Naive thymus-derived CD4-positive, alpha-beta T cell (primary cell): ENCODE measurements at regions of chr5 and their contacts with region 1.

Region 1: GRCh38 chr5:373710-374602 is 52.4 kb downstream of the AHRR start:
- DNase-seq: peak in 6 of 9 donors; percentile 34 to 84 (median 41)
- ATAC-seq: peak; percentile 56
- H3K4me3 ChIP-seq: no peak overlapping the region
- H3K4me3 Mint-ChIP-seq: peak overlapping the region in 8 of 10 donors; percentile 24 to 82 (median 54)
- H3K27ac ChIP-seq: peak overlapping the region; percentile 7
- H3K27ac Mint-ChIP-seq: peak overlapping the region in 1 of 9 donors; percentile 94
- H3K4me1 ChIP-seq: peaks cover 0 to 7% of the 10 kb centered on the region in 2 donors
- H3K4me1 Mint-ChIP-seq: peaks cover 9 to 77% (median 13%) of the 10 kb centered on the region in 7 donors
- H3K27me3 ChIP-seq: no peaks in the 10 kb centered on the region
- H3K27me3 Mint-ChIP-seq: peaks cover 0 to 17% (median 4%) of the 10 kb centered on the region in 5 donors

Region 2: DNA sequence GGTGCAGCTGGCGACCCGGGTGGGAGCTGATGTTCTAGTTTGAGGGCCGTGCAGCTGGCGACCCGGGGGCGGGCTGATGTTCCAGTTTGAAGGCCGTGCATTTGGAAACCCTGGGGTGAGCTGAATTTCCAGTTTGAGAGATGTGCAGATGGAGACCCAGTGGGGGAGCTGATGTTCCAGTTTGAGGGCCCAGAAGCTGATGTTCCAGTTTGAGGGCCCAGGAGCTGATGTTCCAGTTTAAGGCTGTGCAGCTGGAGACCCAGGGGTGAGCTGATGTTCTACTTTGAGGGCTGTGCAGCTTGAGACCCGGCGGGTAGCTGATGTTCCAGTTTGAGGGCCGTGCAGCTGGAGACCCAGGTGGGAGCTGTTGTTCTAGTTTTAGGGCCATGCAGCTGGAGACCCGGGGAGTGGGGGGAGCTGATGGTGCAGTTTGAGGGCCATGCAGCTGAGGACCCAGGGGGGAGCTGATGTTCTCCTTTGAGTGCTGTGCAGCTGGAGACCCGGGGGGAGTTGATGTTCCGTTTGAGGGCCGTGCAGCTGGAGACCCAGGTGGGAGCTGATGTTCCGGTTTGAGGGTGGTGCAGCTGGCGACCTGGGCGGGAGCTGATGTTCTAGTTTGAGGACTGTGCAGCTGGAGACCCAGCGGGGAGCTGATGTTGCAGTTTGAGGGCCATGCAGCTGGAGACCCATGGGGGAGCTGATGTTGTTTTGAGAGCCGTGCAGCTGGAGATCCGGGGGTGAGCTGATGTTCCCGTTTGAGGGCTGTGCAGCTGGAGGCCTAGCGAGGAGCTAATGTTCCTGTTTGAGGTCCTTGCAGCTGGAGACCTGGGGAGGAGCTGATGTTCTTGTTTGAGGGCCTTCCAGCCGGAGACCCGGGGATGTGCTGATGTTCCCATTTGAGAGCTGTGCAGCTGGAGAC is 88.1 kb before region 1 on chr5:
- CTCF ChIA-PET with region 1: no interaction called
- POLR2A ChIA-PET with region 1: no interaction called
- intact Hi-C with region 1: no loop called
- DNase-seq: no peak
- ATAC-seq: no peak
- H3K4me3 ChIP-seq: no peak overlapping the region
- H3K4me3 Mint-ChIP-seq: no peak overlapping the region
- H3K27ac ChIP-seq: no peak overlapping the region
- H3K27ac Mint-ChIP-seq: peak overlapping the region in 2 of 9 donors; percentile 41 to 69
- H3K4me1 ChIP-seq: no peaks in the 10 kb centered on the region
- H3K4me1 Mint-ChIP-seq: peaks cover 21 to 67% (median 51%) of the 10 kb centered on the region in 7 donors
- H3K27me3 ChIP-seq: no peaks in the 10 kb centered on the region
- H3K27me3 Mint-ChIP-seq: no peaks in the 10 kb centered on the region

Region 3: DNA sequence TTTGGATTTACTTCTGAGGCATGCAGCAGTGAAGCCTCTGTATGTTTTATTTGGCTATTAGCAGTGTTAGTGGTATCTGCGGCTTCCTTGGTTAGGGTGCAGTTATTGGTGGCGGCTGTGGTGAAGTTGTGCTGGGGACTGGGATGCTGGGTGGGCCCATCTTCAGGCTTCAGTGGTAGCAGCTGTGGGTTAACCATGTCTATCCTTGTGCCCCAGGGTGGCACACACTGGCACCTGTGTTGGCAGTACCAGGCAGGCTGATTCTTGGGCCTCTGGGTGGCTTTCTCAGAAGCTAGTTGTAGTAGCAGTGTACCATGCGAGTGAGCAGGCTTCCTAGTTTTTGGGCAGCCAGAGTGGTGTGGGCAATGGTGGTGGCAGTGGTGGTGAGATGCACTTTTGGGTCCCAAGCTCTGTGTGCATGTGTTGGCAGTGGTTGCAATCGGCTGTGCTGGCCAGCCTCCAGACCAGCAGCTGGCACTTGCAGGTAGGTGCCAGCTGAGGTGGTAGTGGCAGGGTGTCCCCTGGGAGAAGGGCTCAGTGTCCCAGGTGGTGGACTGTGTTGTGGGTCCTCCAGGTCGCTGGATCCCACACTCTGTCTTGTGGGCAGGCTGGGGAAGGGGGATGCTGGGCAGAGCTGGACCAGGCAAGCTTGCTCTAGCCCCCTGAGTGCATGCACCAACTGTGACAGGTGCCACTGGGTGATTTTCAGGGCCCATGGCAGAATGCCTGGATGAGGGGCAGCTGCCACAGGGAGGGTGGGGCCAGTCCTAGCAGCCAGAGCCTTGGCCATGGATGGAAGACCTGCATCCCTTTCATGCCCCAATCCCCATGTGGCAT is 38.8 kb before region 1 on chr5:
- CTCF ChIA-PET with region 1: no interaction called
- POLR2A ChIA-PET with region 1: no interaction called
- intact Hi-C with region 1: loop called in 1 of 2 experiments (anchors 5 kb)
- DNase-seq: no peak
- ATAC-seq: no peak
- H3K4me3 ChIP-seq: no peak overlapping the region
- H3K4me3 Mint-ChIP-seq: peak overlapping the region in 2 of 10 donors; percentile 9 to 70
- H3K27ac ChIP-seq: no peak overlapping the region
- H3K27ac Mint-ChIP-seq: peak overlapping the region in 1 of 9 donors; percentile 82
- H3K4me1 ChIP-seq: no peaks in the 10 kb centered on the region
- H3K4me1 Mint-ChIP-seq: peaks cover 0 to 60% (median 0%) of the 10 kb centered on the region in 7 donors
- H3K27me3 ChIP-seq: no peaks in the 10 kb centered on the region
- H3K27me3 Mint-ChIP-seq: peaks cover 0 to 10% (median 0%) of the 10 kb centered on the region in 5 donors

Region 4: DNA sequence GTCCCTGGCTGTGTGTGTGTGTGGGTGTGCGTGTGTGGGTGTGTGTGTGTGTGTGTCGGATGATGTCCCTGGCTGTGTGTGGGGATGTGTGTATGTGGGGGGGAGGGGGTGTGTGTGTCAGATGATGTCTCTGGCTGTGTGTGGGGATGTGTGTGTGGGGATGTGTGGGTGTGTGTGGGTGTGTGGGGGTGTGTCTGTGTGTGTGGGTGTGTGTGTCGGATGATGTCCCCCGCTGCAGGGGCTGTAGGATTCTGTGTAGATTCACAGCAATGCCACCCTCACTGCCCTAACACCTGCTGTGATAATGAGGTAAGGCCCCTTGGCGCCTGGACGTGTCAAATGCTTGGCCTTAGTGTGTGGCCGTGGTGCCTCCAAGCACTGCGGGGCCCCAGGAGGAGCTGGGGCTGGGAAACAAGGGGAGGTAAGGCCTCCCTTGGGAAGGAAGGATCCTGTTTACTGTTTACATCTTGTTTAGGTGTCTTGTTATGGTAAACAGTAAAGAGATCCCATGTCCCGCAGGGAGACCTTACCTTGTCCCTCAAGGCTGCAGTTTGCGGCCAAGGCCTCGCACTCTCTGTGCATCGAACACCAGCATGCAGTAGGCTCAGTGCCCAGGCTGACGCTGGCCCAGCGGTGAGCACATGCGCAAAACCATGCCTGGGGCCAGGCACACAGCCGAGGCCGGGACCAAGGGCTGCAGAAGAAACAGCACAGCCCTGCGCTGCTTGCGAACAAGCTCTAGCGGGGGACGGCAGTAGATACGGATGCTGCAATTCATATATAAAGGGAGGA is 28.4 kb before region 1 on chr5:
- CTCF ChIA-PET with region 1: no interaction called
- POLR2A ChIA-PET with region 1: no interaction called
- intact Hi-C with region 1: loop called in 1 of 2 experiments (anchors 2 kb)
- DNase-seq: no peak
- ATAC-seq: no peak
- H3K4me3 ChIP-seq: no peak overlapping the region
- H3K4me3 Mint-ChIP-seq: peak overlapping the region in 5 of 10 donors; percentile 38 to 79 (median 42)
- H3K27ac ChIP-seq: no peak overlapping the region
- H3K27ac Mint-ChIP-seq: peak overlapping the region in 1 of 9 donors; percentile 77
- H3K4me1 ChIP-seq: peaks cover 0 to 7% of the 10 kb centered on the region in 2 donors
- H3K4me1 Mint-ChIP-seq: peaks cover 0 to 58% (median 23%) of the 10 kb centered on the region in 7 donors
- H3K27me3 ChIP-seq: no peaks in the 10 kb centered on the region
- H3K27me3 Mint-ChIP-seq: peaks cover 3 to 39% (median 23%) of the 10 kb centered on the region in 5 donors